ENCODE measurements at regions of chr17 and their contacts with region 1.

Region 1: GRCh38 chr17:81519284-81519955 is 6.8 kb upstream of the ACTG1 start:
- DNase-seq: peak; percentile 63 to 81 (median 72)
- H3K4me3 ChIP-seq: peak overlapping the region; percentile 50
- H3K4me3 Mint-ChIP-seq: peak overlapping the region in 5 of 7 donors; percentile 15 to 50 (median 29)
- H3K27ac ChIP-seq: peak overlapping the region; percentile 24
- H3K27ac Mint-ChIP-seq: no peak overlapping the region
- H3K4me1 ChIP-seq: peaks cover 37% of the 10 kb centered on the region
- H3K4me1 Mint-ChIP-seq: peaks cover 21 to 41% (median 28%) of the 10 kb centered on the region in 3 donors
- H3K27me3 ChIP-seq: peaks cover 10% of the 10 kb centered on the region
- H3K27me3 Mint-ChIP-seq: peaks cover 0 to 2% of the 10 kb centered on the region in 2 donors

Region 2: GRCh38 chr17:81553018-81553615 is 33.7 kb after region 1 on chr17:
- CTCF ChIA-PET with region 1: interaction called, 16 read pairs
- POLR2A ChIA-PET with region 1: interaction called, 4 read pairs
- DNase-seq: peak; percentile 69 to 83 (median 72)
- H3K4me3 ChIP-seq: peak overlapping the region; percentile 75
- H3K4me3 Mint-ChIP-seq: peak overlapping the region; percentile 85 to 95 (median 90)
- H3K27ac ChIP-seq: peak overlapping the region; percentile 77
- H3K27ac Mint-ChIP-seq: peak overlapping the region; percentile 82 to 98 (median 94)
- H3K4me1 ChIP-seq: peaks cover 22% of the 10 kb centered on the region
- H3K4me1 Mint-ChIP-seq: peaks cover 30 to 43% (median 32%) of the 10 kb centered on the region in 3 donors
- H3K27me3 ChIP-seq: no peaks in the 10 kb centered on the region
- H3K27me3 Mint-ChIP-seq: peaks cover 0 to 3% of the 10 kb centered on the region in 2 donors

Region 3: DNA sequence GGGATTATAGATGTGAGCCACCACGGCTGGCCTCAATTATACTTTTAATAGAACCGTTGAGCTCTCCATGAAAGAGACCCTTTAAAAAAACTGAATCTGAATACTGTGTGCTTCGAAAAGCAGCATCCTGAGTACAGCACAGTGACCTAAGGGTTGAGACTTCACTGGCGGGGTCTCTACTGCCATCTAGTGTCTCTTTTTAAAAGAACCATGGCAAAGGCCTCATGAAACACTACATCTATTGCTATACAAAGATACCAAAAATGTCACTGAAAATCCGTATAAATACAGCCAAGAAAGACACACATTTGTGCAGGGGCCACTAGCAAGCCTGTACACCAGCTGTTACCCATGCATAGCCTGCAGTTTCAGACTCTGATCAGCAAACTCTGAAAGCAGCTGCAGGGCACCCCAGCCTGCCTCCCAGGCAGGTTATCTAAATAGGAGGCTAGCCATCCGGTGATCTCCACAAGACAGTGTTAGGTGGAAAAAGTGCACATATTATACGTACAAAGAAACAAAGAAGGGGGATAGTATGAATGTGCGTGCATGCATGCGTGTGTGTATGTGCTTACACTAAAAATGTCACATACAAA is 82.2 kb after region 1 on chr17:
- CTCF ChIA-PET with region 1: interaction called, 29 read pairs
- POLR2A ChIA-PET with region 1: no interaction called
- DNase-seq: peak in 4 of 5 donors; percentile 14 to 57 (median 50)
- H3K4me3 ChIP-seq: no peak overlapping the region
- H3K4me3 Mint-ChIP-seq: no peak overlapping the region
- H3K27ac ChIP-seq: no peak overlapping the region
- H3K27ac Mint-ChIP-seq: peak overlapping the region in 3 of 8 donors; percentile 15 to 85 (median 43)
- H3K4me1 ChIP-seq: no peaks in the 10 kb centered on the region
- H3K4me1 Mint-ChIP-seq: peaks cover 3 to 9% (median 6%) of the 10 kb centered on the region in 3 donors
- H3K27me3 ChIP-seq: no peaks in the 10 kb centered on the region
- H3K27me3 Mint-ChIP-seq: no peaks in the 10 kb centered on the region

Measured in CD8-positive, alpha-beta memory T cell (primary cell).